ENCODE measurements at regions of chr17 and their contacts with region 1.

Region 1: DNA sequence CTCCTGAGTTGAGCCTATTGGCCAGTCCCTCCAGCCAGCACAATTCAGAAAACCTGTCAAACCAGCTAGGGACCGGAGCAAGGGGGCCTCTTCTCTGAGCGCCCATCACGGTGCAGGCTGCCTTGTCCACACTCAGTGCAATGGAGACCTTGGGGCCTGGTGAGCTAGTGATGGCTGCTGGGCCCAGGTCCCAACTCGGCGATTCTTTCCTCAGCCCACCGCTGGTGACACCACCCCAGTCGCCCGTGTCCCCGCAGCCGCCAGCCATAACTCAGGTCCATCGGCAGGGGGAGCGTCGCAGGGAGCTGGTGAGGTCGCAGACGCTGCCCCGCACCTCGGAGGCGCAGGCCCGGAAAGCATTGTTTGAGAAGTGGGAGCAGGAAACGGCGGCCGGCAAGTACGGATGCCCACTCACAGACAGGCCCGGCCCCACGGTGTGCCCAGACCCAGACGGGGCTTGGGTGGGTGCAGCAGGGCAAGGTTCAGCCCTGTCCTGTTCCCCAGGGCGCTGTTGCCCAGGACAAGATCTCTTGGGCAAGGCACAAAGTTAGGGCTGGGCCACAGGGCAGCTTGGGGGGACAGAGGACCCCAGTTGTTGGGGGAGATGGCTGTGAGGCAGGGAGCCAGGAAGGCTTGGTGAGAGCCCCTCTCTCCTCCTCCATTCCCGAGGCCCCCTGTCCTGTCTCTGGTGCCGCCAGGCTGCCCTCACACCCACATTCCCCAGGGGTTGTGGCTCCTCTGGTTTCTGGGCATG is 10.8 kb downstream of the SMTNL2 start:
- DNase-seq: peak; percentile 66 to 81 (median 79)
- H3K4me3 ChIP-seq: peak overlapping the region in 1 of 7 experiments; percentile 38
- H3K27ac ChIP-seq: no peak overlapping the region
- H3K4me1 ChIP-seq: peaks cover 0 to 7% (median 2%) of the 10 kb centered on the region in 4 experiments
- H3K27me3 ChIP-seq: peaks cover 0 to 4% (median 0%) of the 10 kb centered on the region in 5 experiments

Region 2: DNA sequence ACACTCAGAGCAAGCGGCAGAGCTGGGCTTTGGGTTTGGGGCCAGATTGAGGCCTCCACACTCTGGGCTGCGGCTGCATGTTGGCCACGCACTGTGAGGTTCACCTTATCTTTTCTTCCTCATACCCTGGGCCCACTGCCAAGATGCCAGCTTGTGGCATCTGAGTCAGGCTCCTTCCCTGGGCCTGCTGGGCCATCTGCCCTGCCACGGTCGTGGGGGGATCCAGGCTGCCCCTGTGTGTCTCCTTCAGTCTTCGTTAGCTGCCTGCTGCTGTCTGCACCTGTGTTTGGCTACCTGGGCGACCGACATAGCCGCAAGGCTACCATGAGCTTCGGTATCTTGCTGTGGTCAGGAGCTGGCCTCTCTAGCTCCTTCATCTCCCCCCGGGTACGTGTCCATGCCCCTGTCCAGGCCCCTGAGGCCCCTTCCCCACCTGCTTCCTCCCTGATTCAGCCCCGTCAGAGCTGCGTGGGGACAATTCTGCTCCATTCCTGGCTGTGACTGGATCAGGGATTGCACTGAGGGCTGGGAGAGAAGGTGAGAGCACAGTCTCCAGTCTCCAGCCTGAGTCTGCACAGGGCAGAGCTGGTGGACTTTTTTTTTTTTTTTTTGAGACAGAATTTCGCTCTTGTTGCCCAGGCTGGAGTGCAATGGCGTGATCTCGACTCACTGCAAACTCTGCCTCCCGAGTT is 150.2 kb before region 1 on chr17:
- CTCF ChIA-PET with region 1: no interaction called
- POLR2A ChIA-PET with region 1: no interaction called
- DNase-seq: peak; percentile 95 to 99 (median 98)
- H3K4me3 ChIP-seq: peak overlapping the region in 3 of 7 experiments; percentile 11 to 48 (median 19)
- H3K27ac ChIP-seq: no peak overlapping the region
- H3K4me1 ChIP-seq: peaks cover 0 to 64% (median 36%) of the 10 kb centered on the region in 4 experiments
- H3K27me3 ChIP-seq: no peaks in the 10 kb centered on the region

Region 3: GRCh38 chr17:4583782-4584100 is 11.4 kb before region 1 on chr17:
- CTCF ChIA-PET with region 1: interaction called, 10 read pairs
- POLR2A ChIA-PET with region 1: no interaction called
- DNase-seq: peak; percentile 56 to 73 (median 70)
- H3K4me3 ChIP-seq: peak overlapping the region in 6 of 7 experiments; percentile 36 to 76 (median 58)
- H3K27ac ChIP-seq: no peak overlapping the region
- H3K4me1 ChIP-seq: peaks cover 0 to 20% (median 15%) of the 10 kb centered on the region in 4 experiments
- H3K27me3 ChIP-seq: peaks cover 0 to 58% (median 33%) of the 10 kb centered on the region in 5 experiments

Region 4: GRCh38 chr17:4657678-4658077 is 62.6 kb after region 1 on chr17:
- CTCF ChIA-PET with region 1: no interaction called
- POLR2A ChIA-PET with region 1: no interaction called
- DNase-seq: peak in 2 of 3 donors; percentile 39 to 56
- H3K4me3 ChIP-seq: no peak overlapping the region
- H3K27ac ChIP-seq: peak overlapping the region in 1 of 2 experiments; percentile 43
- H3K4me1 ChIP-seq: peaks cover 2 to 21% (median 14%) of the 10 kb centered on the region in 4 experiments
- H3K27me3 ChIP-seq: no peaks in the 10 kb centered on the region

Region 5: DNA sequence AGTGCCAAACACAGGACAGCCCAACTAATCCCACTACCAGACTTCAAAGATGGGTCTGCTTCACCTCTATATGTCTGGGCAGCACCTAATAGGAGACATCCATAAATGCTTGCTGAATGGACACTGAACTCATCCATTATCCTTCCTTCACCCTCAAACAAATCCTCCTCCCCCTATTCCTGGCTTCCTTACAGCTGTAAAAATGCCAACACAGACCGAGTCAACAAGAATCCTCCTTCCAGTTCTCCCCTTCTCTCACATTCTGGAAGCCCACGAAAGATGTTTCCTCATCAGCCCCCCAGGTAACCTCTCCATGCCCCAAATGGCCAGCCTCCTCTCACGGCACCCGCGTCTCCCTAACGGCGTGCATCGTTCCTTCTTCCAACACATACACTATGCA is 96.6 kb after region 1 on chr17:
- CTCF ChIA-PET with region 1: no interaction called
- POLR2A ChIA-PET with region 1: no interaction called
- DNase-seq: no peak
- H3K4me3 ChIP-seq: no peak overlapping the region
- H3K27ac ChIP-seq: no peak overlapping the region
- H3K4me1 ChIP-seq: peaks cover 0 to 6% (median 0%) of the 10 kb centered on the region in 4 experiments
- H3K27me3 ChIP-seq: no peaks in the 10 kb centered on the region